PC-3 (cell line): ENCODE measurements at regions of chr6 and their contacts with region 1.

Region 1: GRCh38 chr6:786946-787763 is 94.2 kb upstream of the EXOC2 start:
- DNase-seq: peak; percentile 57
- ATAC-seq: no peak
- H3K4me3 ChIP-seq: no peak overlapping the region
- H3K27ac ChIP-seq: no peak overlapping the region
- H3K4me1 ChIP-seq: no peaks in the 10 kb centered on the region
- H3K27me3 ChIP-seq: peaks cover 37% of the 10 kb centered on the region
- CTCF ChIP-seq: peak; percentile 86

Region 2: GRCh38 chr6:593139-593906 is 193.8 kb before region 1 on chr6:
- CTCF ChIA-PET with region 1: no interaction called
- POLR2A ChIA-PET with region 1: no interaction called
- intact Hi-C with region 1: loop called (anchors 1 kb)
- DNase-seq: peak; percentile 82
- ATAC-seq: peak; percentile 75
- H3K4me3 ChIP-seq: no peak overlapping the region
- H3K27ac ChIP-seq: no peak overlapping the region
- H3K4me1 ChIP-seq: no peaks in the 10 kb centered on the region
- H3K27me3 ChIP-seq: no peaks in the 10 kb centered on the region
- CTCF ChIP-seq: peak; percentile 74

Region 3: GRCh38 chr6:1363729-1364572 is 576.8 kb after region 1 on chr6:
- CTCF ChIA-PET with region 1: no interaction called
- POLR2A ChIA-PET with region 1: no interaction called
- intact Hi-C with region 1: no loop called
- DNase-seq: peak; percentile 16
- ATAC-seq: no peak
- H3K4me3 ChIP-seq: no peak overlapping the region
- H3K27ac ChIP-seq: no peak overlapping the region
- H3K4me1 ChIP-seq: no peaks in the 10 kb centered on the region
- H3K27me3 ChIP-seq: peaks cover 74% of the 10 kb centered on the region
- CTCF ChIP-seq: peak; percentile 52